ENCODE measurements at regions of chr9 and their contacts with region 1.

Region 1: GRCh38 chr9:137070201-137070905 is at the start of gene SAPCD2:
- DNase-seq: peak; percentile 90 to 94 (median 91)
- H3K4me3 ChIP-seq: peak within 1 kb of the TSS; percentile 2 to 71 (median 39)
- H3K4me3 Mint-ChIP-seq: peak within 1 kb of the TSS; percentile 75 to 91
- H3K27ac ChIP-seq: peak within 1 kb of the TSS; percentile 53 to 56
- H3K27ac Mint-ChIP-seq: peak within 1 kb of the TSS; percentile 77 to 96 (median 89)
- H3K4me1 ChIP-seq: peaks cover 41 to 71% of the 10 kb centered on the region in 2 donors
- H3K4me1 Mint-ChIP-seq: peaks cover 61% of the 10 kb centered on the region
- H3K27me3 ChIP-seq: peaks cover 0 to 5% of the 10 kb centered on the region in 2 donors
- H3K27me3 Mint-ChIP-seq: peaks cover 0 to 3% (median 1%) of the 10 kb centered on the region in 3 donors
- CTCF ChIP-seq: no peak
- polyA plus RNA-seq, gene SAPCD2: 0.03 to 3.1 (median 1.7) TPM

Region 2: DNA sequence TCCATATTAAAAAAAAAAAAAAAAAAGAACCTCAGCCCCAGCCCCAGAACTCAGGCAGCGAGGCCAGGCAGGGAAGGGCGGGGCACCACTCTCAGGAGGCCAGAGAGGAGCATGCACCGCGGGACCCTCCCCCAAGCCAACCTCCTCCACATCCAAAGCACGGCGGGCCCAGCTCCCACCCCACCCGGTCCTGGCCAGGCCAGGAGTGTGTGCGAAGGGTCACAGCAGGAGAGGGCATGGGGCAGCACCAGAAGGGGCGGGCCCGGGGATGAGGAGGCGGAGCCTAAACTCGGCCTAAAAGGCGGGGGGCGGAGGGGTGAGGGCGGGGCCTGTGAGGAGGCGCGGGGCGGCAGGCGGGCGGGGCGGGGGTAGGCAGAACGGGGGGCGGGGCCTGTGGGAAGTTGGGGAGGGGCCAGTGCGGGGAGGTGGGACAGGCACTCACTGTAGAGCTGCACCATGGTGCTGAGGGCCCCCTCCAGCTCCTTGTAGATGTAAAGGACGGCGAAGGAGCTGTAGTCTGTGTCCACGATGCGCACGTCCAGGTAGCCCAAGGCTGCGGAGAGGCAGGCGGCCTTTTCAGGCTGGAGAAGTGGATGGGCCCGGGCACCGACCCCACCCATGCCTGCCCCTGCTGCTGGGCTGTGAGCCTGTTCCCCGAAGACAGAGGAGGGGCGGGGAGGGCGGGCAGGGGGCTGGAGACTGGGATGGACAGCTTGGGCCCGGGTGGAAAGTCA is 307.3 kb before region 1 on chr9:
- intact Hi-C with region 1: no loop called
- DNase-seq: peak in 1 of 3 donors; percentile 28
- H3K4me3 ChIP-seq: no peak overlapping the region
- H3K4me3 Mint-ChIP-seq: no peak overlapping the region
- H3K27ac ChIP-seq: no peak overlapping the region
- H3K27ac Mint-ChIP-seq: no peak overlapping the region
- H3K4me1 ChIP-seq: no peaks in the 10 kb centered on the region
- H3K4me1 Mint-ChIP-seq: peaks cover 13% of the 10 kb centered on the region
- H3K27me3 ChIP-seq: no peaks in the 10 kb centered on the region
- H3K27me3 Mint-ChIP-seq: peaks cover 5 to 18% (median 18%) of the 10 kb centered on the region in 3 donors
- CTCF ChIP-seq: no peak

Region 3: DNA sequence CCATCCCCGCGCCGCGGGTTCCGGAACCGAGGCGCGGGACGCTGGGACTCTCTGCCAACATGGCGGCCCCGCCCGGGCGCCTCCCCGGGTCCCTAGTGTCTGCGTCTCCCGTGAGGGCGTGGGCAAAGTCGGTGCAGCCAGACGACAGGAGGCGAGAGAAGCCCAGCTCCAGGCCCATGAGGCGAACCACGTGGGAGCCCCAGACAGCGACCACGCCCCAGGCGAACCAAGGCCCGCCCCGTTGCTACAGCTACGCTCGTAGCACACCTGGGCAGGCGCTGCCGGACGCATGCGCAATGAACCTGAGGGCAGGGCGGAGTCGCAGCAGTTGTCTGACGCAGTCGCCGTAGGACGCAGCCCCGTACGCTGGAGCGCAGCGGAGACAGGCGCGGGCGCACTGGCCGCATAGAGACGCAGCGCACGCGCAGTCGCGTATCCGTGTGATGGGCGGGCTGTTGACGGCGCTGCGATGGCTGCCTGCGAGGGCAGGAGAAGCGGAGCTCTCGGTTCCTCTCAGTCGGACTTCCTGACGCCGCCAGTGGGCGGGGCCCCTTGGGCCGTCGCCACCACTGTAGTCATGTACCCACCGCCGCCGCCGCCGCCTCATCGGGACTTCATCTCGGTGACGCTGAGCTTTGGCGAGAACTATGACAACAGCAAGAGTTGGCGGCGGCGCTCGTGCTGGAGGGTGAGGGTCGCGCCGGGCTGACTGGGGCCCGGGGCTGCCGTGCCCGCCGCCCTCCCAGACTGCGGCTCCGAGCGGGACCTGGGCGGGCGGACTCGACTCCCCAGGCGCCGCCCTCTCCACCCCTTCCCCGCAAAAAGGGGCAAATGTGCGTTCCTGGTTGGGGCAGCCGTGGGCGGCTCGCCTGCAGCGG is 16.4 kb after region 1 on chr9 and contains the start of gene MAN1B1:
- intact Hi-C with region 1: loop called in 1 of 2 experiments (anchors 2 kb)
- DNase-seq: peak; percentile 99 to 100 (median 100)
- H3K4me3 ChIP-seq: peak within 1 kb of the TSS; percentile 75 to 77 (median 77)
- H3K4me3 Mint-ChIP-seq: peak within 1 kb of the TSS; percentile 89 to 93
- H3K27ac ChIP-seq: peak within 1 kb of the TSS; percentile 70 to 93
- H3K27ac Mint-ChIP-seq: peak within 1 kb of the TSS; percentile 95 to 98 (median 97)
- H3K4me1 ChIP-seq: peaks cover 23 to 28% of the 10 kb centered on the region in 2 donors
- H3K4me1 Mint-ChIP-seq: peaks cover 30% of the 10 kb centered on the region
- H3K27me3 ChIP-seq: no peaks in the 10 kb centered on the region
- H3K27me3 Mint-ChIP-seq: peaks cover 0 to 5% (median 1%) of the 10 kb centered on the region in 3 donors
- CTCF ChIP-seq: no peak
- polyA plus RNA-seq, gene MAN1B1: 29.3 to 38.2 (median 33.3) TPM

Measured in CD14-positive monocyte (primary cell).